ENCODE measurements at regions of chr15 and their contacts with region 1.

Region 1: GRCh38 chr15:92903941-92904831 is 4.1 kb downstream of the CHD2 start:
- DNase-seq: peak; percentile 98 to 100
- ATAC-seq: peak; percentile 97
- H3K4me3 ChIP-seq: peak overlapping the region; percentile 65 to 92
- H3K27ac ChIP-seq: peak overlapping the region; percentile 92 to 100
- H3K4me1 ChIP-seq: peaks cover 0 to 5% of the 10 kb centered on the region in 2 donors
- H3K27me3 ChIP-seq: peaks cover 0 to 1% of the 10 kb centered on the region in 2 donors

Region 2: DNA sequence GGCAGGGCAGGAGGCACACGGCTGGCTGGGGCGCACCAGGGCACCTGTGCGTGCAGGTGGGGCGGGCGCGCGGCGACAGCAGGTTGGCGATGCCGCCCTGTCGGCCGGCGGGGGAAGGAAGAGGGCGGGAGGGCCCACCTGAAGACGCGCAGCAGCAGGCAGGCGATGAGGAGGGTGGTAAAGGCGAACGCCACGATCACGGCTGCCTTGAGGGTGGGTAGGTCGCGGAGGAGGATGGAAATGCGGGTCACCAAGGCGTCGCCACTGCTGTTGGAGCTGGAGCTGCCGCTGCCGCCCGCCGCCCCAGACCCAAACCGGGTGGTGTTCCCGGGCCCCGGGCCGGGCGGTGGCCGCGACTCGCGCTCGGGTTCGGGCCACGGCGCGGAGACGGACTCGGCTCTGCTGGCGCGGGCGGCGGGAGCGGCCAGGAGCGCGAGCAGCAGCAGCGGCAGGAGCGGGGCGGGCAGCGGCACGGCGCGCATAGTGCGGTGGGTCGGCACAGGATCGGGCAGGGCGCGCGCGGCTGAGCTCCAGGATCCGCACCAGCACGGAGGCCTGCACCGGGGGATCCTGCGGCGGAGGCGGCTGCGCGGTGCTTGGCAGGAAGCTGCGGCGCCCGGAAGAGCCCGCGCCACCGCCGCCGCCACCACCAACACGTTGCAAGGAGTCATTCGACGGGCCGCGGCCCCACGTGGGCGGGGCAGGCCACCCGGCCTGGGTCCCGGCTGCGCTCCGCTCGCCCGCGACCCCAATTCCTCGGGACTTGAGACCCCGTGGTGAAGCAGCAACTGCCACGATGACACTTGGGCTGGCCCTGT is 248.8 kb before region 1 on chr15 and contains the start of gene FAM174B:
- intact Hi-C with region 1: no loop called
- DNase-seq: peak; percentile 61 to 88
- ATAC-seq: peak; percentile 53
- H3K4me3 ChIP-seq: peak within 1 kb of the TSS; percentile 45 to 64
- H3K27ac ChIP-seq: no peak within 1 kb of the TSS
- H3K4me1 ChIP-seq: no peaks in the 10 kb centered on the region
- H3K27me3 ChIP-seq: no peaks in the 10 kb centered on the region
- total RNA-seq, gene FAM174B: 10.3 to 16.0 TPM

Region 3: DNA sequence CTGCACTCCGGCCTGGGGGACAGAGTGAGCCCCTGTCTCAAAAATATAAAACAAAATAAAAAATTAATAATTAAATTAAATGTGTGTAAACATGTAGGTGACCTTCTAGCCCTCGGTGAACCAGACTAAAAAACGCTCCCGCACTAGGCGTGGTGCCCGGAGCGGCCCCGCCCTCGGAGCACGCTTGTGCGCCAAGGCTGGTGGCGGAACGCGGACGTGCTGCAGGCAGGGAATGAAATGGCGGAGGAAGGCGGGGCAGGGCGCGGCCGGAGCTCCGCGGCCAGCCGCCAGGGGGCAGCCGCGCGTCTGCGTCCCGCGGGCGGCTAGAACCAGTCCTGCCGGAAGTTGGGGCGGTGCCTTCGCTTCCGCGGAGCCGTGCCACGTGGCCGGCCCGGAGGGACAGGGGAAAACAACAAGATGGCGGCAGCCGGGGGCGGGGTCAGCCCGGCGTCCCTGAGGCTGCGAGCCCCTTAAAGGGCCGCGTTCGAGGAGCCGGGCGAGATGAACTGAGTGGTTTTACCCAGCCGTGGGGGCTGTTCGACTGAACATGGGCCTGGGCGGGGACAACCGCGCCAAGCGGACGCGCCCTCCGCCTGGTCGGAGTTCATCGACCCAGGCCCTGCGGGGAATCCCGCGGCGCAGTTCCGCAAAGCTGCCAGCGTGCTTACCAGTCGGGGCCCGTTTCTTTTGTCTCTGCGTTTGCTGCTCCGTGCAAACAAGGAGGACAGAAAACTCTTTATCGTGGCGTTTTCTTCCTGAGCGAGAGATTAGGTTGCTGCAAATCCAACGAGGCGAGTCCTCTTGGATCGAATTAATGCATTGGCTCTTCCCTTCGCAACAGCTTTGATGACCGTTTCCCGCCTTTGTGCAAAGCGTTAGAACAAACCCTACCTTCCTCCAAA is 95.0 kb before region 1 on chr15:
- intact Hi-C with region 1: loop called (anchors 1 to 5 kb)
- DNase-seq: peak; percentile 99
- ATAC-seq: peak; percentile 96
- H3K4me3 ChIP-seq: peak overlapping the region; percentile 20 to 22
- H3K27ac ChIP-seq: peak overlapping the region; percentile 92 to 98
- H3K4me1 ChIP-seq: no peaks in the 10 kb centered on the region
- H3K27me3 ChIP-seq: no peaks in the 10 kb centered on the region

Measured in aorta (tissue), 5 donors.